ENCODE measurements at regions of chr10 and their contacts with region 1.

Region 1: DNA sequence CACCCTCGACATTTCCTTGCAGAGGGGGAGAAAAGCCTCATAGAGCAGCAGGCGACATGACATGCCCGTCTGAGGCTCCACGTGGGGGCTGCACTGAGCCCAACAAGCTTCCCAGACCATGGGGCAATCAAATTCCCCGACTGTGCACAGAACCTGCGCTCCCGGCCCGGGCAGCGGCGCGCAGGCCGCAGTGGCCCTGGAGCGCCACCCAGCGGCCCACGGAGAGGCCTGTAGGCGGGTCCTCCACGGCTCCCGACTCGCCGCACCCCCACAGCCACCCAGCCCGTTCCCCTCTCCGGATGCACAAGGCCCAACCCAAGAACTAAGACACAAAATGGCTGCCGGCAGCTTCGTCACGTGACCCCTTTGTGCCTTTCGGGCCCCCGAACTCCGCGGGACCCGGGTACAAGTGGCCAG is 816 bp downstream of the EPC1 start:
- DNase-seq: peak; percentile 94
- H3K4me3 ChIP-seq: peak overlapping the region; percentile 96 to 99 (median 97)
- H3K27ac ChIP-seq: peak overlapping the region; percentile 99
- H3K4me1 ChIP-seq: peaks cover 17% of the 10 kb centered on the region
- H3K27me3 ChIP-seq: no peaks in the 10 kb centered on the region
- CTCF ChIP-seq: peak; percentile 78 to 99

Region 2: GRCh38 chr10:32049113-32049512 is 297.0 kb before region 1 on chr10:
- CTCF ChIA-PET with region 1: no interaction called
- dilution Hi-C with region 1: no loop called
- in situ Hi-C with region 1: loop called (anchors 25 kb)
- intact Hi-C with region 1: no loop called
- DNase-seq: peak; percentile 62
- H3K4me3 ChIP-seq: no peak overlapping the region
- H3K27ac ChIP-seq: no peak overlapping the region
- H3K4me1 ChIP-seq: peaks cover 12% of the 10 kb centered on the region
- H3K27me3 ChIP-seq: no peaks in the 10 kb centered on the region
- CTCF ChIP-seq: no peak

Region 3: DNA sequence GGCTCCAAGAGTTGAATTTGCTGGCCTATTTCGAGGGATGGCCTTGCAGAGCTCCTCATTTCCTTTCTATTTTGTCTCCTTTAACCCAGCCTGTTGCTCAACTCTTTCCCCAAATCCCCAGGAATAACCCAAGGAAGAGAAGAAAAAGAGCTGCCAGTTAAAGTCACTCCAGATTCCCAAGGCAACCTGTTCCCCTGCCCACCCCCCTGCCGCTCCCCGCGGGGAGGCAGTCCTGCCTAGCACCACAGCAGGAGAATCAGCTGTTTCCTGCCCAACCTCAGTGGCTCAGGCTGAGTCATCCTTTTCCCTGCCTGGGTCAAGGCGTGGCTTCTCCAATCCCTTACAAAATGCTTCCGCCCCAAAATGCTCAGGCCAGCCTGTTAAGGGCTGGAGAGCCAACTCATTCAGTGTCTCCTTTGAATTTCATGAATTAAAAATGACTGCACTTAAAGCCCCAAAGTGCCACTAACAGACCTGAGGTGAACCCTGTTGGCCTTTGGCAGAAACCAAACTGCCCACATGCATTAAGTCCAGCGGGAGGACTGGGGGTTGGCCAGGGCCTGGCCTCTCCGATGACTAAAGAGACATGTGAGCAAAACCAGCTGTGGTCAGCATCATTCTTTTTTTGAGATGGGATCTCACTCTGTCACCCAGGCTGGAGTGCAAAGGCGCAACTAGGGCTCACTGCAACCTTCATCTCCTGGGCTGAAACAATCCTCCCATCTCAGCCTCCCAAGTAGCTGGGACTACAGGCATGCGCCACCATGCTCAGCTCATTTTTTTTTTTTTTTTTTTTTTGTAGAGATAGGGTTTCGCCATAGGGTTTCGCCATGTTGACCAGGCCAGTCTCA is 206.7 kb before region 1 on chr10:
- CTCF ChIA-PET with region 1: no interaction called
- dilution Hi-C with region 1: no loop called
- in situ Hi-C with region 1: no loop called
- intact Hi-C with region 1: loop called (anchors 2 kb)
- DNase-seq: peak; percentile 94
- H3K4me3 ChIP-seq: no peak overlapping the region
- H3K27ac ChIP-seq: peak overlapping the region; percentile 89
- H3K4me1 ChIP-seq: peaks cover 32% of the 10 kb centered on the region
- H3K27me3 ChIP-seq: no peaks in the 10 kb centered on the region
- CTCF ChIP-seq: peak; percentile 24 to 48

Region 4: DNA sequence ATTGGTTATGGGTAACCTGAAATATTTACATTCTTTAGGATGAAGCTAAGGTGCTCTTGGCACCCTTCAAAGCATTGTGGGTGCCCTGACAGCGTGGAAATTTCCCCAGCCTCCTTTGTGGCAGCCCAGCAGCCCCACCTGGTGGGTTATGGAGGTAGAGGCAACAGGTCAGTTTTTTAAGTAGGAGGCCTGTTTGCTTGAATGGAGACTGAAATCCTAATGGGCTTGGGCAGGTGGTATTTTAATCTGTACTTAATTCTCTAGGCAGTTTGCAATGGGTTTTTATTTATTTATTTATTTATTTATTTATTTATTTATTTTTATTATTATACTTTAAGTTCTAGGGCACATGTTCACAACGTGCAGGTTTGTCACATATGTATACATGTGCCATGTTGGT is 138.6 kb before region 1 on chr10:
- CTCF ChIA-PET with region 1: no interaction called
- dilution Hi-C with region 1: no loop called
- in situ Hi-C with region 1: no loop called
- intact Hi-C with region 1: loop called (anchors 2 kb)
- DNase-seq: peak; percentile 39
- H3K4me3 ChIP-seq: no peak overlapping the region
- H3K27ac ChIP-seq: no peak overlapping the region
- H3K4me1 ChIP-seq: no peaks in the 10 kb centered on the region
- H3K27me3 ChIP-seq: no peaks in the 10 kb centered on the region
- CTCF ChIP-seq: peak; percentile 64 to 85

Region 5: DNA sequence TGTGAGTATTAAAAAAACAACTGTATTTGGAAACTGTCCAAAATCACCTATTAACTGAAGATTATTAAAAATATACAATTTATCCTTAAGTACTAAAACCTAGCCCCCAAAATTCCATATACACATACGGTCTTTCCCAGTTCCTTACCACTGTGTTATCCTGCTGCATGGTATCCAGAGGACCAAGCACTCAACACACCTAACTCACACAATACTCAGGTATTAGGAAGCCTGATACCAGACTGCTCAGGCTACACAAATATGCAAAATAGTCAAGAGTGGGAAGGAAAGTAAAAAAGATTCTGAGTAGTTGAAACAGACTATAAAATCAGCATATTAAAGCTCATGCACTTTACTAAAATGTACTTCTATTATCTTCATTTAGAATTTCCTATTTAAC is 66.3 kb before region 1 on chr10:
- CTCF ChIA-PET with region 1: interaction called, 3 read pairs
- dilution Hi-C with region 1: loop called (anchors 5 kb)
- in situ Hi-C with region 1: no loop called
- intact Hi-C with region 1: no loop called
- DNase-seq: no peak
- H3K4me3 ChIP-seq: no peak overlapping the region
- H3K27ac ChIP-seq: no peak overlapping the region
- H3K4me1 ChIP-seq: no peaks in the 10 kb centered on the region
- H3K27me3 ChIP-seq: no peaks in the 10 kb centered on the region
- CTCF ChIP-seq: no peak

Region 6: GRCh38 chr10:32308027-32308603 is 38.0 kb before region 1 on chr10:
- CTCF ChIA-PET with region 1: no interaction called
- dilution Hi-C with region 1: no loop called
- in situ Hi-C with region 1: no loop called
- intact Hi-C with region 1: no loop called
- DNase-seq: no peak
- H3K4me3 ChIP-seq: no peak overlapping the region
- H3K27ac ChIP-seq: no peak overlapping the region
- H3K4me1 ChIP-seq: no peaks in the 10 kb centered on the region
- H3K27me3 ChIP-seq: no peaks in the 10 kb centered on the region
- CTCF ChIP-seq: no peak